Activated naive CD8-positive, alpha-beta T cell treated with anti-CD3 and anti-CD28 coated beads, Interleukin-2, amount 10 ng/mL, durations not matched to agents 7 days and 5 days (primary cell): ENCODE measurements at regions of chr17 and their contacts with region 1.

Region 1: DNA sequence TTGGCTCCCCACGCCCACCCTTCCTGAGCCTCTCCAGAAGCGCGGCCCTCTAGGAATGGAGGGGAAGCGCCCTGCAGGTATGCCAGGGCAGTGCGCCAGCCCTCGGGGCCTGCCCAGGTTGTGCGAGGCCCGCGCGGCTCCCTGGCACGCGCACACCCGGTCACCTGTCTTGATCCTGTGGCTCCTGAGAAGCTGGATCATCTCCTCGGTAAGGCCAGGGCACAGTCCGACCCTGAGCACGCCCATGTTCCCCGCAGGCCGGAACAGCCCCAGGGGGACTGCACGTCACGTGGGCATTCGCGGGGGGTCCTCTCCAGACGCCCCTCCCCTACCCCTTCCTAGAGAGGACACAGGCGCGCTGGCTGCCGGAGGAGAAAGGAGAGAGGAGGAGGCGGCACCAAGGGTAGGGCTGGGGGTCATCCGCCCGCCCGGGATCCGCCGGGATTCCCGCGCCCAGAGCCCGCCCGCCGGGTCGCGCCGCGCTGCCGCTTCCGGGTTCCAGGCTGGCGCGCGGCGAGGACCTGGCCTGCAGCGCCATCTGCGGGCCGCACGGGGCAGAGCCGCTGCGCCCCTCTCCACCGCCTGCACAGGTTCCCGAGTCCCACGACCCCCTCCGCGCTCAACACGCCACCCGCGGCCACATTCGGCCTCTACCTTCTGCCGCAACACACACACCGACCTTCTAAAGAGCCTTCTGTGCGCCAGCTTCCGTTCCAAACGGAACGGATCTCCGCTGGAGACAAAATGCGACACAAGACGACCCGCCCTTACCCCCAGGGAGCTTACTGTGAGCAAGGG is at the start of gene RAD51D:
- DNase-seq: peak; percentile 93
- ATAC-seq: peak; percentile 86
- H3K4me3 Mint-ChIP-seq: peak within 1 kb of the TSS; percentile 96
- H3K27ac Mint-ChIP-seq: peak within 1 kb of the TSS; percentile 96
- H3K4me1 Mint-ChIP-seq: peaks cover 30% of the 10 kb centered on the region
- H3K27me3 Mint-ChIP-seq: no peaks in the 10 kb centered on the region
- total RNA-seq, gene RAD51D: 27.3 to 33.8 TPM

Region 2: DNA sequence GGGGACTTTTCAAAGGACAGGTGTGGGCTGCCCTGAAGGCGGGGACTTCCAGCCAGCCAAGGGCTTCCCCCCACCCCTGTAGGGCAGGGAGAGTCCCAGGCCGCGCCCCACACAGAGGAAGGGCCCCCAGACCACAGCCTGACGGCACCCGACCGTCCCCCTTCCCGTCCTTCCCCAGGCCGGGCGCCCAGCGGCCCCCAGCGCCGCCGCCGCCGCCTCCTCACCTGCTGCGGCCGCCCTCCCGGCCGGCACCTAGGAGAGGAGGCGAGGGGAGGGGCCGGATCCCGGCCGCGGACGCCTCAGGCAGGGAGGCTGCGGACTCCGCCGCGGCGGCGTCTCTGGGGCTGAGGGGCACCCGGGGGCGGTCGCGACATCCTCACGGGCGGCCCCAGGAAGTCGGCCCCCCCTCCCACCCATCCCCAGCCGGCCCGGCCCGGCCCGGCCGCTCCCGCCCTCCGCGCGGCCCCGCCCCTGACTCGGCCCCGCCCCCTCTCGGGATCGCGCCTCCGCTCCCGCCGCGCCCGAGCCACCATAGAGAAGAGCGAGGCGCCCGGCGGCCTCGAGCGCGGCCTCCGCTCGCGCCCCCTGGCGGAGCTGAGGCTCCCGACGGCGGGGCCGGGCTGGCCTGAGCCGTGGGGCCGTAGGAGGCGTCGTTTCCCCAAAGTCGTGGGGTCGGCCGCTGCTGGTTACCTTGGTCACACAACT is 30.5 kb before region 1 on chr17:
- POLR2A ChIA-PET with region 1: interaction called, 15 read pairs
- DNase-seq: peak; percentile 98
- ATAC-seq: peak; percentile 85
- H3K4me3 Mint-ChIP-seq: peak overlapping the region; percentile 85
- H3K27ac Mint-ChIP-seq: peak overlapping the region; percentile 91
- H3K4me1 Mint-ChIP-seq: peaks cover 24% of the 10 kb centered on the region
- H3K27me3 Mint-ChIP-seq: no peaks in the 10 kb centered on the region

Region 3: GRCh38 chr17:35104844-35105450 is 14.6 kb before region 1 on chr17:
- POLR2A ChIA-PET with region 1: interaction called, 10 read pairs
- DNase-seq: no peak
- ATAC-seq: no peak
- H3K4me3 Mint-ChIP-seq: no peak overlapping the region
- H3K27ac Mint-ChIP-seq: no peak overlapping the region
- H3K4me1 Mint-ChIP-seq: peaks cover 2% of the 10 kb centered on the region
- H3K27me3 Mint-ChIP-seq: no peaks in the 10 kb centered on the region